ENCODE measurements at regions of chr6 and their contacts with region 1.

Region 1: DNA sequence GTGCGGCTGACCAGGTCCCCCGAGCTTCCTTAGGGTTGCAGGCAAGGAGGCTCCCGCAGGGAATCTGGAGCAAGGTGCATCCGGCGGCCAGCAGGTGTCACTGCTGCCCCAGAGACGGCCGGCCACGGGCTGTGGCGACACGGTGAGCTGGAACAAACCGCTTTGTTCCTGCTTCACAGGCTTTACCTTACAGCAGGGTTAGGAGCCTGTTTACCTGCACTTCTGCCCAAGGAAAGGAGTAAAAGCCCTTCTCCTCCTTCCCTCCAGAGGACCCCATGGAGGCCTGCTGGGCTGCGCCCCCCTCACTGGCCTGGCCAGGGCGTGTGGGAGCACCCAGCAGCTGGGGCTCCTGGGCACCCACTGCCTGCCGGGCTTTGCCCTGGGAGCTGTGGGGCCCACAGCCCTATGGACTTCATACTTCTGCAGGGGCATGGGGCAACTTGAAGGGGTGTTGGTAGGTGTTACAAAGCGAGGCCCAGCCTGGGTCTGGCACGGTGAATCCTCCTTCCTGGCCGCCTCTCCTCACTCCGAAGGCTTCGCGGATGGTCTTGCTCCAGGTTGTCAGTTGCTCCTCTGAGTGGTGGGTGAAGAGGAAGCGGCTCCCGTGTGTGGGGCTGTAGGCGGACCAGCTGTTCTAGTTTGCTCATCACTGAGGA is 88.4 kb downstream of the CDC5L start:
- DNase-seq: peak; percentile 81 to 88 (median 85)
- ATAC-seq: peak; percentile 96
- H3K4me3 ChIP-seq: no peak overlapping the region
- H3K27ac ChIP-seq: no peak overlapping the region
- H3K4me1 ChIP-seq: peaks cover 8% of the 10 kb centered on the region
- H3K27me3 ChIP-seq: no peaks in the 10 kb centered on the region
- CTCF ChIP-seq: peak; percentile 84 to 96 (median 92)
- POLR2A ChIP-seq: no peak

Region 2: DNA sequence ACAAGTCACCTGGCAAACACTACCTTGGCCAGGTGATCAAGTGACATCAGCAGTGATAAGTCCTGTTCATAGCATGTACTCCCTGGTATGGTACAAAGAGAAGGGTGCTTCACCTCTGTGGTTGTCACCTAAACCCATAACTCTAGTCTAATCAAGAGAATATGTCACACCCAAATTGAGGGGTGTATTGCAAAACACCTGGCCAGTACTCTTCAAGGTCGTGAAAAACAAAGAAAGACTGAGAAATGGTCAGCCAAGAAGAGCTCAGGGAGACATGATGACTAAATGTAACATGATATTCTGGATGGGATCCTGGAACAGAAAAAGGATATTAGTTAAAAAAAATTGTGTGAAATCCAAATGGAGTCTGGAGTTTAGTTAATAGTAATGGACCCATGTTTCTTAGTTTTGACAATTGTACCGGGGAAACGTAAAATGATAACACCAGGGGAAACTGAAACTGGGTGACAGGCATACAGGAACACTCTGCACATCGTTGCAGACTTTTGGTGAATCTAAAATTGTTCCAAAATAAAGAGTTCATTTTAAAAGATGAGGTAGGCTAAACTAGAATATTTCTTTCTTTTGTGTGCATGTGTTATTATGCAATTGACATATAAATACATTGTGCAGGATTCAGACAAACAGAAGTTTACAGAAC is 173.6 kb after region 1 on chr6:
- intact Hi-C with region 1: loop called (anchors 5 kb)
- DNase-seq: no peak
- ATAC-seq: peak; percentile 45
- H3K4me3 ChIP-seq: no peak overlapping the region
- H3K27ac ChIP-seq: no peak overlapping the region
- H3K4me1 ChIP-seq: no peaks in the 10 kb centered on the region
- H3K27me3 ChIP-seq: no peaks in the 10 kb centered on the region
- CTCF ChIP-seq: no peak
- POLR2A ChIP-seq: no peak

Region 3: DNA sequence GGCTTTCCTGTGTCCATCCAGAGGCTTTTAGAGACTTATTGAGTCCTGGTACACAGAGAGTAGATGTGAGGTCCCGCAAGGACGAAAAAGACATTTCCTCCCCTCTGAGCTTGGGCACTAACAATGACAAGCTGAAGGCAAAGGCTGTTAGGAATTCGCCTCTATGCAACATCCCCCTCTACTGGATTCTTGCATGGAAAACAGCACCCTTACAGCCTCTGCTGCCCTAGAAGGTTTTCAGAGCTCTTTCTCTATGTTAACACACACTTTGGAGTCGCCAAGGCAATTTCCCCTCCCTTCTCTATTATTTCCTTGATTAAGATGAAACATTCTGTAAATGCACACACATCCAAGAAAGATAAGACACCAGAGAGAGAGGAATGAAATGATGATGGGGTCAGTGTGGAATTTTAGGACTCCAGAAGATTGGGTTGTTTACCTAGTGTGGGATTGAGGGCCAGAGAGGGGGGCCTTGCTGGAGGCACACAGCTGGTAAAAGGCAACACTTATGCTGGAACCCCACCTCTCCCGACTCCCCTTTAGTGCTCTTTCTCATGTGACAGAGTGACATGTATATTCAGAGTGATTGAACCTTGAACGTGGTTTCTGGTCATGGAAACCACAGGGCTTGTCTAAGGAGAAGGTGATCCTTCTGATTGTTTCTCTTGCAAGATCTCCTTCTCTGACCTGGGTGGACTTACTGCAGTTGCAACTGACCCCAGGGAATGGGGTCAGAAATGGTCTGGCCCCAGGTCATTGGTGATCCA is 1239.0 kb after region 1 on chr6:
- intact Hi-C with region 1: loop called (anchors 10 kb)
- DNase-seq: peak; percentile 47 to 72 (median 48)
- ATAC-seq: peak; percentile 79
- H3K4me3 ChIP-seq: no peak overlapping the region
- H3K27ac ChIP-seq: no peak overlapping the region
- H3K4me1 ChIP-seq: no peaks in the 10 kb centered on the region
- H3K27me3 ChIP-seq: no peaks in the 10 kb centered on the region
- CTCF ChIP-seq: peak; percentile 61 to 87 (median 82)
- POLR2A ChIP-seq: no peak

Region 4: DNA sequence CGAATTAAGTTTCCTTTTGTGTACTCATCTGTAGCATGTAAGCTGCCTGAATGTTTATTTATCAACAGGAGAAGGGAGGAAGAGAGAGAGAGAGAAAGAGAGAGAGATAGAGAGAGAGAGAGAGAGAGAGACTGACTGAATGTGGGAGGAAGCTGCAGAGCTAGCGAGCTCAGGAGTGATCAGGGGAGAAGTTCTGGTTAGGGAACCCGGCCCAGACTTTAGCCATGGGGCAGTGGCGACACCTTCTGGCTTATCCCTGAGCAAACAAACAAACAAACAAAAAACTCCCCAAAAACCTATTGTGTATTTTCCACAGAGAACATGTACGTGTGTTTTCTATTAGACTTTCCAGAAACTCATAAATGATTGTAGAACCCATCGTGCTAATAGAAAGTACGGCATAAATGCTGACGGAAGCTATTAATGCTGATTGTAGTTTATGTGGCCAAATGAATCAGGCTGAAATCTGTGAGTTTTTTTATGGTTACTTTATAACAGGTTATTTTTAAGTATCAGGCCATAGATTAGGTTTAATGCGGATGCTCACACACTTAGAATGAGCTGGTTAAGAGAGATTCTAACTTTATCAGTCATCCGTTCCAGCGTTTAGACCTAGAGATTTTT is 1446.9 kb after region 1 on chr6:
- intact Hi-C with region 1: loop called (anchors 5 kb)
- DNase-seq: peak; percentile 35 to 60 (median 56)
- ATAC-seq: peak; percentile 55
- H3K4me3 ChIP-seq: no peak overlapping the region
- H3K27ac ChIP-seq: no peak overlapping the region
- H3K4me1 ChIP-seq: no peaks in the 10 kb centered on the region
- H3K27me3 ChIP-seq: no peaks in the 10 kb centered on the region
- CTCF ChIP-seq: peak; percentile 19 to 72 (median 59)
- POLR2A ChIP-seq: no peak